Mucosa of descending colon (tissue), 3 donors: ENCODE measurements at regions of chr9 and their contacts with region 1.

Region 1: DNA sequence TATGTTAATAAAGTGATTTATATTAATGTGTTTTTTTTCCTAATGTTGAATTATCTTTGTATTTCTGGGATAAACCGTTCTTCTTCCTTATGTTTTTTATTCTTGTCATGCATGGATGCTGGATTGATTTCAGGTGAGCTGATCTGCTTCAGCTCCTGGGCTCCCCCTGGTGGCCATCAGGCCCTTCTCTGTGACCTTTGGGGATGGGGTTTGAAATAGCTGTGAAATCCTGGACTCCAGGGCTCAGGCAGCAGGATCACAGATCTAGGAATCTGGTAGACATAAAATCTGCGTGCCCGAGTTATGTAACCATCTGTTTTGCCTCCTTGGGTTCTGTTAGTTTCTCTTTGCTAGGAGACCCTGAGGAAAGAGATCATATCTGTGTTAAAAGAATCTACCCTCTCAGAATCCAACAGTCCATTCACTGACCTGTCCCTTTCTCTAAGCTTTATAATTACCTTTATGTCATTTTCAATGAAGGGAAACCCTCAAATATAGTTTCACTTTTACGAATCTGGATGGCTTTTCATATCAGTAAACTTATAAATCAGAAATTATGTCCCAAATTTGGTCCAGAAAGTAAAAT is 12.2 kb upstream of the OR13J1 start:
- DNase-seq: peak; percentile 75 to 94 (median 89)
- ATAC-seq: peak; percentile 94
- H3K4me3 ChIP-seq: no peak overlapping the region
- H3K4me1 ChIP-seq: no peaks in the 10 kb centered on the region
- CTCF ChIP-seq: peak; percentile 93

Region 2: DNA sequence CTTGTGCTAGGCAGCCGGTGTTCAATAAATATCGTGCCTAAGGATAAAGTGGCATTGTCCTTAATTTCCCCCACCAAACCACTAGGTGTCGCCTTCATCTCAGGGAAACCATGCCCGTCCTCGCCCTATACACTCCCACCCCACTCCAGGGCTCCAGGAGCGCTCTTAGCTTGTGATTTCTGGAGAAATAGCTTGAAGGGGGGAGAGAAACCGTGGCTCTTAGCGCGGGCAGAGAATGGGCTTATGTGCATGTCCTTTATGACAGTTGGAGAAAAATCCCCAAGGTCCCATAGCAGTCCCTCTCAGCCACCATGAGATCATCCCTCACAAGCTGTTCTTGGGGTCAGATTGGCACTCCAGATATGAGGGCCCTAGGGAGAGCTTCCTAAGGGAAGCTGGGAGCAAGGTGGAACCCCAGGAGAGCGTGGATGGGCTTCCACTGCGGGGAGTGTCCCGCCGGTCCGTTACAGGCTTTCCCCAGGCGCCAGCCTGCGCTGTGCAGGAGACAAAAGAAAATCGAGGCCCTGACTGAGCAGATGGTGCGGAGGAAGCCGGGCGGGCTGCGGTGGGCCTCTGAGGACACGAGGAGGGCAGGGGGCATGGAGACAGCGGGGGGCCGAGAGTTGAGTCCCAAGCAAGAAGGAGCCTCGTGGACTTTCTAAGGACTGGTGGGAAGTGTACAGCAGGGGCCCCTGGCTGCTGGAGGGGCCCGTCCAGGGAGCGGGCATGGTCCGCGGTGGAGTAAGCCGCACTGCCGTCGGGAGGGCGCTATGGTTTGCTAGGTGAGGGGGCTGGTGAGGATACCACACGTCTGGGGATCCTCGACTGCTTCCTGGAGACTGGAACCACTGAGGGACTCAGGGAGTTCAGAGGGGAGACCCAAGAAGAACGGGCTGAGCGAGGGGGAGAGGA is 91.7 kb before region 1 on chr9:
- intact Hi-C with region 1: loop called (anchors 5 to 10 kb)
- DNase-seq: peak in 2 of 3 donors; percentile 47 to 74
- ATAC-seq: peak; percentile 94
- H3K4me3 ChIP-seq: no peak overlapping the region
- H3K4me1 ChIP-seq: no peaks in the 10 kb centered on the region
- CTCF ChIP-seq: peak; percentile 56

Region 3: DNA sequence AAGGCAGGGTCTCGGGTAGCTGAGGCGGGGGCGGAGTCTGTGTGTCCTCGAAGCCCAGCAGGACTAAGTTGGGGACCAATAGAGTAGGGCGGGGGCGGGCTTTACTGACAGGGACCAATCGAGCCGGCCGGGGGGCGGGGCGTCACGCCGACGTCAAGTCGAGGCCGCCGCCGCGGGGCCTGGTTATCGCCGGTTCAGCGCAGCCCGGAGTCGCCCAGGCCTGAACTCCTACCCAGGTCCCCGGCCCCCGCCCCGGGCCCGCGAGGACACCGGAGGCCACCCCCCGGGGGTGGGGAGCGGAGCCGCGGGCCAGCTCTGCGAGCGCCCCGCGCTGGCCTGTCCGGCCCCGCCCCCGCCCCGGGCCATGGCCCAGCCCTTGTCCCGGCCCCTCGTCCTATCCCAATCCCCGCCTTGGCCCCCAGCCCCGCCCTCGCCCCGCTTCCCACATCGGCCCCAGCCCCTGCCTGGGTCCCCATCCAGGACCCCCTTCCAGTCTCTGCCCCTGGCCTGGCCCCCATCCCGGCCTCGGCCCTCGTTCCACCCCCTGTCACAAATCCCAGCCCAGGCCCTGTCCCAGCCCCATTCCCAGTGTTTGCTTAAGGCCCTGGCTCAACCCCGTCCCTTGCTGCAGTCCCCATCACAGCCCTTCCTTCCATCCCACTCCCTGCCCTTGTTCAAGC is 53.1 kb before region 1 on chr9 and contains the start of gene TMEM8B:
- intact Hi-C with region 1: loop called (anchors 5 to 10 kb)
- DNase-seq: peak; percentile 97 to 100 (median 97)
- ATAC-seq: peak; percentile 86
- H3K4me3 ChIP-seq: peak within 1 kb of the TSS; percentile 56
- H3K4me1 ChIP-seq: peaks cover 23% of the 10 kb centered on the region
- CTCF ChIP-seq: no peak
- total RNA-seq, gene TMEM8B: 12.4 to 22.8 (median 18.9) TPM

Region 4: DNA sequence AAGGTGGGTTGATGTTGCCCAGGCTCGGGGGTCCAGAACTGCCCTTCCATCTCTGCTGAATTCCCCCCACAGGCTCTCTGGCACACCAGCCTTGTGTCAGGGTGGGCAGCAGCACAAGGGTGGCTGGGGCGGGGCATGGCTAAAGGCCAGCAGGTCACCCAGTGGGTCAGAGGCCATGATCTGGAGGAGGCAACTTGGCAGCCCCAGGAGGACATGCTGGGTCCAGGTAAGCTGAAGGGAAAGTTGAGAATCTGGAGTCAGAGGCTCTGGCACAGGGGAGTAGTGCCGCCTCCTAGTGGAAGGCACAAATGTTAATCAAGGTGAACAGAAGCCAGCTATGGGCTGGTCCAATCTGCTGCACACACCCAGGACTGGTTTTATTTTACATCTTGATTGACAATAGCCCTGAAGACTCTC is 47.1 kb before region 1 on chr9:
- intact Hi-C with region 1: loop called in 1 of 2 experiments (anchors 10 kb)
- DNase-seq: peak; percentile 62 to 68 (median 66)
- ATAC-seq: peak; percentile 76
- H3K4me3 ChIP-seq: no peak overlapping the region
- H3K4me1 ChIP-seq: peaks cover 33% of the 10 kb centered on the region
- CTCF ChIP-seq: peak; percentile 25

Region 5: DNA sequence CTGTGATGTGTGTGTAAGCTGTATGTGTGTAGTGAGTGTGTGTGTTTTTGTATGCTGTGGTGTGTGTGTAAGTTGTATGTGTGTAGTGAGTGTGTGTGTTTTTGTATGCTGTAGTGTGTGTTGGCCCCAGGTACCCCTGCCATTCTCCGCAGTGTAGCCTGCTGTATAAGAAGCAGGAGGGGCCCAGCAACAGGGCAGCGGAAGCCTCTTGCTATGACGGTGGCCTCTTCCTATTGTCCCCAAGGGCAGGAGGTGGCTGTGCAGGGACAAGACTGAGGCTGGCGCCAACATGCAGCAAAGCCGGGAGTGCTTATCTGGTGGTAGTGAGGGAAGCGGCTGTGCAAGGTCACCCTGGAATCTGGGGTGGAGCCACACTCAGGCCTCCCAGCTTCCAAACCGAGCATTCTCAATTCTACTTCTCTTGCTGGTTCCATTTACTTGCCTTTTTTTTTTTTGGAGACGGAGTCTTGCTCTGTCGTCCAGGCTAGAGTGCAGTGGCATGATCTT is 32.0 kb after region 1 on chr9:
- intact Hi-C with region 1: no loop called
- DNase-seq: peak; percentile 74 to 85 (median 80)
- ATAC-seq: peak; percentile 67
- H3K4me3 ChIP-seq: no peak overlapping the region
- H3K4me1 ChIP-seq: peaks cover 49% of the 10 kb centered on the region
- CTCF ChIP-seq: no peak